ENCODE measurements at regions of chr13 and their contacts with region 1.

Region 1: GRCh38 chr13:38008636-38009035 is 139.1 kb upstream of the TRPC4 start:
- DNase-seq: no peak
- H3K4me3 ChIP-seq: no peak overlapping the region
- H3K27ac ChIP-seq: no peak overlapping the region
- H3K4me1 ChIP-seq: no peaks in the 10 kb centered on the region
- H3K27me3 ChIP-seq: no peaks in the 10 kb centered on the region
- CTCF ChIP-seq: no peak

Region 2: GRCh38 chr13:37576601-37577000 is 432.0 kb before region 1 on chr13:
- CTCF ChIA-PET with region 1: no interaction called
- POLR2A ChIA-PET with region 1: interaction called, 11 read pairs
- intact Hi-C with region 1: no loop called
- DNase-seq: no peak
- H3K4me3 ChIP-seq: no peak overlapping the region
- H3K27ac ChIP-seq: no peak overlapping the region
- H3K4me1 ChIP-seq: no peaks in the 10 kb centered on the region
- H3K27me3 ChIP-seq: no peaks in the 10 kb centered on the region
- CTCF ChIP-seq: no peak